ENCODE measurements at regions of chr2 and their contacts with region 1.

Region 1: DNA sequence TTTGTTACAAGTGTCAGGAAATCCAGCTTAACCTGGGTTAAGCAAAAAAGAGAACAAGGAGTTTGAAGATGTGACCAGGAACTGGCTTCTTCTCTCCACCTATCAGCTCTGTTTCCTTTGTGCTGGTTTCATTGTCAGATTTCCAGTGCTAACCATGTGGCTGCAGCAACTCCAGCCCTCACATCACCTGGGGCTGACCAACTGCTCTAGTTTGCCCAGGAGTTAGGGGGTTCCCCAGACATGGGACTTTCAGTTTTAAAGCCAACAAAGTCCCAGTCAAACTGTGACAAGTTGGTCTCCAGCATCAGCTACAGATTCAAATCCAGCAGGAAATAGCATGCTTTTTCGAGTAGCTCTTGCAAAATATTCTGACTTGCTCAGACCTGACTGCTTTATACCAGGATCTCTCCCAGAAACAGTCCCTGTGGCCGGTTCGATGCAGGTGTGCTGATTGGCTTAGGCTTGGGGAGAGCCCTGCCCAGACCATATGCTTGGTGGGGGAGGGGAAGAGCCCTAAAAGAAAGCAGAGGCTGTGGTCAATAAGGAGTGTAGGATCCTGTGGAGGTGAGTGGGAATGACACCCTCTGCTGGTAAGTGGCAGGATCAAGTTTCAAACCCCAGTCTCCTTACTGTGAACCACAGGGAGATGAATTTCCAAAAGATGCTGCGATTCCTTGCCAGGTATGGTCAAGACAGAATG is 49.5 kb downstream of the KCNE4 start:
- DNase-seq: no peak
- H3K4me3 ChIP-seq: no peak overlapping the region
- CTCF ChIP-seq: peak; percentile 58

Region 2: DNA sequence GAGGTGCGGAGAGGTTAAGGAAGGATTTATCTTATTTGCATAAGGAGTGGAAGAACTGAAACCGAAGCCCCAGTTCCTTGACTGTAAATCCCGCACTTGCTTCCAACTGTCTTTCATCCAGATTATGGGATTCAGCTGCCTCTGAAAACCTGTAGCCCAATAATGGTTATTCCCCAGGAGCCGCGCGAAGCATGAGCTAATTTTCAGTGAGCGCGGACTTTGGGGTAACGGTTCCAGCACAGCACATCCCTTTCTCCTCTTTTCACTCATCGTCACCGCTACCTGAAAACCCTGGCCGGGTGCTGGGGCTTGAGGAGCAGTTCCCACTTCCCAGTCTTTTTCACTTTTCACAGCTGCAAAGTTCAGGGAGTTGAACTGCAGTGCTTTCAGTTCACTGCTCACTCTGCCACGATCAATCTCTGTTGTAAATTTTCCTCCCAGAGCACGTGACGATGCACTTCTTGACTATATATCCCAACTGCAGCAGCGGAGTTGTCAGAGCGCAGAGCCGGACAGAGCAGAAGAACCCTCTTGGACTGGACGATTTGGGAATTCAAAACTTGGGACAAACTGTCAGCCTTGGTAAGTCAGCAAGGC is 49.7 kb before region 1 on chr2 and contains the start of gene KCNE4:
- in situ Hi-C with region 1: loop called (anchors 5 kb)
- DNase-seq: no peak
- H3K4me3 ChIP-seq: peak within 1 kb of the TSS; percentile 28
- CTCF ChIP-seq: no peak

Measured in astrocyte of the cerebellum (primary cell).